Activated CD4-positive, alpha-beta T cell treated with anti-CD3 and anti-CD28 coated beads for 36 hours (primary cell): ENCODE measurements at regions of chr18 and their contacts with region 1.

Region 1: GRCh38 chr18:3665780-3666525 is 216.0 kb downstream of the TGIF1 start:
- DNase-seq: peak; percentile 81
- ATAC-seq: peak; percentile 64
- H3K4me3 Mint-ChIP-seq: peak overlapping the region; percentile 28
- H3K27ac Mint-ChIP-seq: peak overlapping the region; percentile 17
- H3K4me1 Mint-ChIP-seq: peaks cover 36% of the 10 kb centered on the region
- H3K27me3 Mint-ChIP-seq: no peaks in the 10 kb centered on the region

Region 2: GRCh38 chr18:3297025-3297984 is 368.6 kb before region 1 on chr18:
- CTCF ChIA-PET with region 1: interaction called, 49 read pairs
- POLR2A ChIA-PET with region 1: interaction called, 3 read pairs
- intact Hi-C with region 1: loop called in 1 of 2 experiments (anchors 1 kb)
- DNase-seq: peak; percentile 97
- ATAC-seq: peak; percentile 97
- H3K4me3 Mint-ChIP-seq: peak overlapping the region; percentile 87
- H3K27ac Mint-ChIP-seq: peak overlapping the region; percentile 78
- H3K4me1 Mint-ChIP-seq: peaks cover 2% of the 10 kb centered on the region
- H3K27me3 Mint-ChIP-seq: peaks cover 22% of the 10 kb centered on the region

Region 3: GRCh38 chr18:3454365-3455089 is 211.4 kb before region 1 on chr18:
- CTCF ChIA-PET with region 1: interaction called, 34 read pairs
- POLR2A ChIA-PET with region 1: no interaction called
- intact Hi-C with region 1: loop called (anchors 1 to 2 kb)
- DNase-seq: peak; percentile 40
- ATAC-seq: no peak
- H3K4me3 Mint-ChIP-seq: peak overlapping the region; percentile 94
- H3K27ac Mint-ChIP-seq: peak overlapping the region; percentile 99
- H3K4me1 Mint-ChIP-seq: peaks cover 67% of the 10 kb centered on the region
- H3K27me3 Mint-ChIP-seq: no peaks in the 10 kb centered on the region

Region 4: GRCh38 chr18:3604498-3605408 is 61.2 kb before region 1 on chr18:
- CTCF ChIA-PET with region 1: interaction called, 24 read pairs
- POLR2A ChIA-PET with region 1: no interaction called
- intact Hi-C with region 1: loop called in 1 of 2 experiments (anchors 2 kb)
- DNase-seq: peak; percentile 59
- ATAC-seq: peak; percentile 69
- H3K4me3 Mint-ChIP-seq: no peak overlapping the region
- H3K27ac Mint-ChIP-seq: no peak overlapping the region
- H3K4me1 Mint-ChIP-seq: peaks cover 11% of the 10 kb centered on the region
- H3K27me3 Mint-ChIP-seq: no peaks in the 10 kb centered on the region

Region 5: DNA sequence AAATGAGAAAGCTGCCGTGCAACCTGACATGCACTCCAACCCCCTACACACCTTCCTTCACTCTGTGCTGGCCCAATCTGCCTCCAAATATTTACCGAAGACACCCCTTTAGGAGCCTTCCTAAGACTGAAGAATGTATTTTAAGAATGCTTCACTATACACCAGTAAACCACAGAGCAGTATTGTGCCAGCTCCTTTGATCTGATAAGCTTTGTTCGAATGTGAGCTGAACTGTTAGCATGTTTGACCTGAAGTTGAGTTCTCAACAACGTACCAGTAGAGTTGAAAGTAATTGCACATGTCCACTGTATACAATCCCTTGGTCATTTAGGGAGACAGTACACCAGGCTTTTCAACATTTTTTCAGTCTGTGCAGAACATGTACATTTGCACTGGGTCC is 43.3 kb after region 1 on chr18:
- CTCF ChIA-PET with region 1: interaction called, 10 read pairs
- POLR2A ChIA-PET with region 1: no interaction called
- intact Hi-C with region 1: no loop called
- DNase-seq: no peak
- ATAC-seq: no peak
- H3K4me3 Mint-ChIP-seq: no peak overlapping the region
- H3K27ac Mint-ChIP-seq: no peak overlapping the region
- H3K4me1 Mint-ChIP-seq: peaks cover 3% of the 10 kb centered on the region
- H3K27me3 Mint-ChIP-seq: peaks cover 15% of the 10 kb centered on the region